Psoas muscle (tissue), 8 donors: ENCODE measurements at regions of chr6 and their contacts with region 1.

Region 1: GRCh38 chr6:41735427-41736356 is at the start of gene TFEB:
- DNase-seq: peak; percentile 96 to 97
- ATAC-seq: peak; percentile 65 to 82 (median 78)
- H3K4me3 ChIP-seq: peak within 1 kb of the TSS; percentile 88
- H3K27ac ChIP-seq: peak within 1 kb of the TSS; percentile 96
- H3K4me1 ChIP-seq: peaks cover 27% of the 10 kb centered on the region
- H3K27me3 ChIP-seq: no peaks in the 10 kb centered on the region
- CTCF ChIP-seq: peak; percentile 99
- total RNA-seq, gene TFEB: 35.4 to 64.3 (median 39.8) TPM

Region 2: GRCh38 chr6:41694815-41695526 is 40.7 kb before region 1 on chr6:
- intact Hi-C with region 1: no loop called
- DNase-seq: no peak
- ATAC-seq: peak in 3 of 4 donors; percentile 28 to 58 (median 44)
- H3K4me3 ChIP-seq: no peak overlapping the region
- H3K27ac ChIP-seq: no peak overlapping the region
- H3K4me1 ChIP-seq: peaks cover 52% of the 10 kb centered on the region
- H3K27me3 ChIP-seq: no peaks in the 10 kb centered on the region
- CTCF ChIP-seq: no peak

Region 3: GRCh38 chr6:41705996-41706835 is 29.5 kb before region 1 on chr6:
- intact Hi-C with region 1: loop called in 1 of 2 experiments (anchors 2 kb)
- DNase-seq: peak; percentile 87 to 95
- ATAC-seq: peak; percentile 88 to 91 (median 90)
- H3K4me3 ChIP-seq: peak overlapping the region; percentile 37
- H3K27ac ChIP-seq: peak overlapping the region; percentile 85
- H3K4me1 ChIP-seq: peaks cover 89% of the 10 kb centered on the region
- H3K27me3 ChIP-seq: no peaks in the 10 kb centered on the region
- CTCF ChIP-seq: peak; percentile 83